MCF 10A (cell line): ENCODE measurements at regions of chr11 and their contacts with region 1.

Region 1: DNA sequence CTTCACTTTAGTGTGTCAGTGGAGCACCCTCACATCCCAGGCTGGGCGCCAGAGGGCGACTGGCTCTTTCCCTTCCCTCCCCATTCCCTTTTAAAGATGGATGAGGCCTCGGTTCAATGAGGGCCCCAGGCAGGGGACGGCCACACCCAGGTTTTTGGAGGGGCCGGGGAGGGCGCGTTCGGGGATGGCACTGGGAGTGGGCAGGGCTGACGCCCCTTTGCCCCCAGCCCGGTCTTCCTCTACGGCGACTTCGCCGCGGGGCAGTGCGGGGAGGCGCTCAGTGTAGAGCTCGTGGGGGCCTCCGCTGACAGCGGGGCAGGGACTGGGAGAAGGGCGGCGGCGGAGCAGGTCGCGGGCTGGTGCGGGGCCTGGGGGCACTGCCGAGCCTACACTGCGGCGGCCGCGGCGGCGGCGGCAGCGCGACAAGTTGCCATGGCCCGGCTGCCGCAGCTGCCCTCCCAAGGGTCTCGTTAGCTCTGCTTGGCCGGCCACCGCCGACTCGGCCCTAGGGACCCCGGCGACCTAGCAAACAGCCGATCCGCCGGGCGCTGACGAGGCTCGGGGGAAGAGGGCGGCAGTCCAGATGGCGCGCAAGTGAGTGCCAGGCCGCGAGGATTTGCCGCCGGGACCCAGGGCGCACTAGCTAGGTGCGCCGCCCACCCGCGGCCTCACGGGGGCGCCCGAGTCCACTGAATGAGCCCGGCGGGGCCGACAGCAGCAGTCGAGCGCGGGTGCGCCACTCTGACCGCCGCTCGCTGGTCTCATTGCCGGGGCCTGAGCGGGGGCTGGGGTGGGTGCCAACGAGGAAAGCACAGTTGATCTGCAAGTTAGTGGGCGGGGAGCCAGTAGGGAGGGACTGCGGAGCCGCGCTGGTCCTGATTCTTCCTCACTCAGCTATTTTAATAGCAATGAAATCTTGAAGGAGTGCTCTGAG is 92.7 kb downstream of the RRM1 start:
- DNase-seq: peak; percentile 80
- H3K4me3 Mint-ChIP-seq: peak overlapping the region; percentile 73
- H3K27ac Mint-ChIP-seq: no peak overlapping the region
- H3K4me1 Mint-ChIP-seq: no peaks in the 10 kb centered on the region
- H3K27me3 Mint-ChIP-seq: no peaks in the 10 kb centered on the region
- CTCF ChIP-seq: peak; percentile 99

Region 2: GRCh38 chr11:4203603-4204360 is 16.5 kb after region 1 on chr11:
- CTCF ChIA-PET with region 1: interaction called, 45 read pairs
- POLR2A ChIA-PET with region 1: interaction called, 3 read pairs
- intact Hi-C with region 1: no loop called
- DNase-seq: no peak
- H3K4me3 Mint-ChIP-seq: no peak overlapping the region
- H3K27ac Mint-ChIP-seq: no peak overlapping the region
- H3K4me1 Mint-ChIP-seq: no peaks in the 10 kb centered on the region
- H3K27me3 Mint-ChIP-seq: peaks cover 13% of the 10 kb centered on the region
- CTCF ChIP-seq: no peak

Region 3: GRCh38 chr11:4496557-4497275 is 309.4 kb after region 1 on chr11:
- CTCF ChIA-PET with region 1: interaction called, 316 read pairs
- POLR2A ChIA-PET with region 1: interaction called, 4 read pairs
- intact Hi-C with region 1: loop called (anchors 1 kb)
- DNase-seq: peak; percentile 23
- H3K4me3 Mint-ChIP-seq: no peak overlapping the region
- H3K27ac Mint-ChIP-seq: no peak overlapping the region
- H3K4me1 Mint-ChIP-seq: no peaks in the 10 kb centered on the region
- H3K27me3 Mint-ChIP-seq: peaks cover 50% of the 10 kb centered on the region
- CTCF ChIP-seq: no peak

Region 4: DNA sequence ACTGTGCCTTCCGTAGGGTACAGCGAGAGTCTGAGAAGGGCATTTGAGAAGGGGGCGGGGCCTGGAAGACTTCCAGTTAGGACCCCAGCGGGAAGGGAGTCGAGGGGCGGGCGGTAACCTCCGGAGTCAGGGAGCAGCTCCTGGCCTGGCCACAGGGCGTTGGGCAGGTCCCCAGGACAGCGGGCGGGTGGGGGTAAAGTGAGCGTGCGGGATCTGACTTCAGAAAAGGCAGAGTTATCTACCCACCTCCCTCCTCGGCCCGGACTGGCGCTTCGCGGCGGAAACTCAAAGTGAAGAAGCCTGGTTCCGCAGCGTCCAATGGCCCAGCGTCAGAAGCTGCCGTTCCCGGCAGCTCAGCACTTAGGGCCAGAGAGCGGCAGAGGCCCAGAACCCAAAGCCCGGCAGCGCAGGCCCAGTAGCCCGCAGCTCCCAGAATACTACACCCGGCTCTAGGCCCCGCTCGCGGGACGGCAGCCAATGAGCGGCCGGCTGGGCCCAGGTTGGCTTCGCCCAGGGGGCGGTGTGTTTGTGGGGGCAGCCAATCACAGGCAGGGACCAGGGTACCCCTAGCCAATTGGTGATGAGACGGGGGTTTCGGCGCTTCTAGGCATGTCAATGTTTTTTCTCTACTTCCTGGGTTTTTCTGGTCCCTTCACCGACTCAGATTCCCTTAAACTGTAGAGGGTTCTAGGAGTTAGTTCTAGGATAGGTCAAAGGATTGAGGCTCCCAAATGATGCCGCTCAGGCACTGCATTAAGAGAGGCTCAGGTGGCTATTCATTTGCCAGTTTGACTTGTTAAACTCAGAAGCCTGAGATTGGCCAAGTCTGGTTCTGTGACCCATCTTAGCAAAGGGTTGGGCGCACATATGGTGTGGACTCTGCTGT is 420.7 kb after region 1 on chr11 and contains the start of gene TRIM68:
- CTCF ChIA-PET with region 1: interaction called, 5 read pairs
- POLR2A ChIA-PET with region 1: interaction called, 3 read pairs
- intact Hi-C with region 1: loop called (anchors 5 kb)
- DNase-seq: peak; percentile 96
- H3K4me3 Mint-ChIP-seq: peak within 1 kb of the TSS; percentile 85
- H3K27ac Mint-ChIP-seq: peak within 1 kb of the TSS; percentile 91
- H3K4me1 Mint-ChIP-seq: peaks cover 25% of the 10 kb centered on the region
- H3K27me3 Mint-ChIP-seq: no peaks in the 10 kb centered on the region
- CTCF ChIP-seq: no peak
- total RNA-seq, gene TRIM68: 7.9 and 9.0 TPM in 2 replicates

Region 5: GRCh38 chr11:4826425-4826824 is 639.1 kb after region 1 on chr11:
- CTCF ChIA-PET with region 1: no interaction called
- POLR2A ChIA-PET with region 1: no interaction called
- intact Hi-C with region 1: loop called (anchors 10 kb)
- DNase-seq: no peak
- H3K4me3 Mint-ChIP-seq: no peak overlapping the region
- H3K27ac Mint-ChIP-seq: no peak overlapping the region
- H3K4me1 Mint-ChIP-seq: no peaks in the 10 kb centered on the region
- H3K27me3 Mint-ChIP-seq: peaks cover 12% of the 10 kb centered on the region
- CTCF ChIP-seq: no peak

Region 6: DNA sequence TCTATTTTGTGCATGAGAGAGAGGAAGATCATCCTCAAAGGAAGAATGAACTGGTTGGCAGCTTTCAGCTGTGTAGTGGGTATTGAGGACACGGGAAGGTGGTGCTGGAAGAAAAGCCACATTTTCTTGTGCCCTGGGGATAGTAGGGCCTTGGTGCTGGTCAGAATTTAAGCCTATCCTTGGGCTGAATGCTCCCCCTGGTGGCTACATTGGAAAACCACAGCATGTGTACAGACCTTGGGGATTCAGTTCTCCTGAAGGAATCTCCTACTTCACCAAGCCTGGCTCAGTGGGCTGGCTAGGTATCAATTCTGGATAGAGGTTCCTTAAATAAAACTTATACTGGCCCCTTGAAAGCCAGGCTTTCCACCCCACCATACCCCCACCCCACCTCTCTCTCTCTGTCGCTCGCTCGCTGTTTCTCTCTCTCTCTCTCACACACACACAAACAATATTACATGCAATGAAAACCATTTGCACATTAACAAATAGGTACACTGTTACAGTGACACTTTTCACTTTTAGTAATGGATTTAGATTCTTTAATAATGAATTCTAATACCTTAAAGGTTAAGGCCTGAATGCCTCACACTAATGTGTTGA is 1193.5 kb after region 1 on chr11:
- CTCF ChIA-PET with region 1: no interaction called
- POLR2A ChIA-PET with region 1: no interaction called
- intact Hi-C with region 1: loop called (anchors 10 kb)
- DNase-seq: peak; percentile 74
- H3K4me3 Mint-ChIP-seq: no peak overlapping the region
- H3K27ac Mint-ChIP-seq: no peak overlapping the region
- H3K4me1 Mint-ChIP-seq: no peaks in the 10 kb centered on the region
- H3K27me3 Mint-ChIP-seq: peaks cover 23% of the 10 kb centered on the region
- CTCF ChIP-seq: peak; percentile 78